Adrenal gland (tissue), 19 donors: ENCODE measurements at regions of chr6 and their contacts with region 1.

Region 1: DNA sequence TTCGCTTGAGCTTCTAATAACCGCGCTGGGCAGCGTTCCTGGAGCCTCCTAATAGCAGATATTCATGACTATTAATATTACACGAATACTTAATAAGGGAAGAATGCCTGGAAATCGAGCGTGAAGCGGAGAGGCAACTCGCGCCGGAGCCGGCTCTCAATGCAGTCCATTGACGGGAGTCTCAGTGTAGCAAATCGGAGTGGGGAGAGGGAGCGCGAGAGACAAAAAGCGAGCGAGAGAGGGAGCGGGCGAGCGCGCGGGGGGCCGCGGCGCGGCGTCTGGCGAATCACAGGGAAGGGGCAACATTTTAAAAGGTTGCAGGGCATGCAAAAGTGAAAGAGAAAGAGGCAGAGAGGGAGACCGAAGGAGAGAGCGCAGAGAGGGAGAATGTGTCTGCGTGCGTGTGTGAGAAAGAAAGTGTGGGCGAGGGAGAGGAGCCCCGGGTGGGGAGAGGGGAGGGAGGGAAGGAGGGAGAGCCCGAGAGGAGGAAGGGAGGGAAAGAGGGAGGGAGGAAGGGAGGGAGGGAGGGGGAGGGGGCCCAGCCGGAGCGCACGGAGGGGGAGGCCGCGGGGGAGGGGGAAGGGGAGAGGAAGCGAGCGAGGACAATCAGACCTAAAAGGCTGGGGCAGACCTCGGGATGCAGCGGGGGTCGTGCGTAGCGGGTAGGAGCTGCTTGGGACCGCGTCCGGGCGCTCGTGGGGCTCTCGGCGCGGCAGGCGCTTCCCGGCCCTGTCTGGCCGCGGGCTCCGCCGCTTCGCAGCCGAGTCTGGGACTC is 2.7 kb downstream of the TFAP2A start:
- DNase-seq: peak; percentile 30 to 67 (median 42)
- H3K4me3 ChIP-seq: peak overlapping the region in 3 of 4 donors; percentile 50 to 87 (median 62)
- H3K27ac ChIP-seq: peak overlapping the region in 2 of 5 donors; percentile 18 to 44
- H3K4me1 ChIP-seq: peaks cover 19 to 25% of the 10 kb centered on the region in 2 donors
- H3K27me3 ChIP-seq: peaks cover 72% of the 10 kb centered on the region
- CTCF ChIP-seq: no peak
- POLR2A ChIP-seq: peak in 1 of 2 donors; percentile 12

Region 2: GRCh38 chr6:10030942-10031537 is 381.1 kb before region 1 on chr6:
- intact Hi-C with region 1: loop called in 1 of 2 experiments (anchors 10 kb)
- DNase-seq: no peak
- H3K4me3 ChIP-seq: no peak overlapping the region
- H3K27ac ChIP-seq: no peak overlapping the region
- H3K4me1 ChIP-seq: no peaks in the 10 kb centered on the region
- H3K27me3 ChIP-seq: no peaks in the 10 kb centered on the region
- CTCF ChIP-seq: peak in 5 of 6 experiments; percentile 38 to 59 (median 52)
- POLR2A ChIP-seq: no peak

Region 3: DNA sequence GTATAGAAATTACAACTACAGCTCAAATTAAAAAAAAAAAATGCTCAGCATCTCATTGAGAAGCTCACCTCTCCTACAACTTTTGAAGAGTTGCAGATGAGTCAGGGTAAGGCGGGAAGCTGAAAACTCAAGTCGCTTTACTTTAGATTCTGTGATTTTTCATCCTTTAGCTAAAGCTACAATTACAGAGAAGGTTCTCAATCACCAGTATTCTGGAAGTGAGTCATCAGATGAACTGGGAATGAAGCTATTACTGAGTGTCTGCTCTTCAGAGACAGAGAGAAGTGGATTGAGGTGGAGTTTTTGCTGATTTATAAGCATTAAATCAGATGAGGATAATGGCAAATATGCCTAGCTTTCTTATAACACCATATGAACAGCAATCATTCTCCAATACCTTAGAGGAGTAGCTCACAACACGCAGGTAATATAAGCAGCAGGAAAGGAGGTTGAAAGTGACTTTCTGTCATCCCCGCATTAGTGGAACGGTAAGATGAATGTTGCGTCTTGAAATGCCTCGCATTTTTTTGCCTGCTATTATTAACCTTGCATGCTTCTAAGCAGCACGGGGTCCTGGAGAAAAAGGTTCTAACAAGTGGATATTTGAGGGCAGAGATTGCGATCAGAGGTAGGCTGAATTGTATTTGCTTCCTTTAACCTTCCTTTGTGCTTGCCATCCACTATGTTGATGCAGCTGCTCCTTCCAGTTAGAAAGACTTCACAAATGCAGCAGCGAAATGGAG is 89.0 kb before region 1 on chr6:
- intact Hi-C with region 1: no loop called
- DNase-seq: no peak
- H3K4me3 ChIP-seq: no peak overlapping the region
- H3K27ac ChIP-seq: no peak overlapping the region
- H3K4me1 ChIP-seq: no peaks in the 10 kb centered on the region
- H3K27me3 ChIP-seq: no peaks in the 10 kb centered on the region
- CTCF ChIP-seq: no peak
- POLR2A ChIP-seq: no peak